Mucosa of descending colon (tissue), 3 donors: ENCODE measurements at regions of chr6 and their contacts with region 1.

Region 1: GRCh38 chr6:2999618-3000557 is at the start of gene NQO2:
- DNase-seq: peak; percentile 96 to 99 (median 97)
- ATAC-seq: peak; percentile 94
- H3K4me3 ChIP-seq: peak within 1 kb of the TSS; percentile 42
- H3K4me1 ChIP-seq: peaks cover 15% of the 10 kb centered on the region
- CTCF ChIP-seq: no peak
- total RNA-seq, gene NQO2: 13.4 to 24.1 (median 23.2) TPM

Region 2: GRCh38 chr6:3031857-3032640 is 32.2 kb after region 1 on chr6:
- intact Hi-C with region 1: no loop called
- DNase-seq: no peak
- ATAC-seq: peak; percentile 57
- H3K4me3 ChIP-seq: no peak overlapping the region
- H3K4me1 ChIP-seq: peaks cover 2% of the 10 kb centered on the region
- CTCF ChIP-seq: no peak

Region 3: DNA sequence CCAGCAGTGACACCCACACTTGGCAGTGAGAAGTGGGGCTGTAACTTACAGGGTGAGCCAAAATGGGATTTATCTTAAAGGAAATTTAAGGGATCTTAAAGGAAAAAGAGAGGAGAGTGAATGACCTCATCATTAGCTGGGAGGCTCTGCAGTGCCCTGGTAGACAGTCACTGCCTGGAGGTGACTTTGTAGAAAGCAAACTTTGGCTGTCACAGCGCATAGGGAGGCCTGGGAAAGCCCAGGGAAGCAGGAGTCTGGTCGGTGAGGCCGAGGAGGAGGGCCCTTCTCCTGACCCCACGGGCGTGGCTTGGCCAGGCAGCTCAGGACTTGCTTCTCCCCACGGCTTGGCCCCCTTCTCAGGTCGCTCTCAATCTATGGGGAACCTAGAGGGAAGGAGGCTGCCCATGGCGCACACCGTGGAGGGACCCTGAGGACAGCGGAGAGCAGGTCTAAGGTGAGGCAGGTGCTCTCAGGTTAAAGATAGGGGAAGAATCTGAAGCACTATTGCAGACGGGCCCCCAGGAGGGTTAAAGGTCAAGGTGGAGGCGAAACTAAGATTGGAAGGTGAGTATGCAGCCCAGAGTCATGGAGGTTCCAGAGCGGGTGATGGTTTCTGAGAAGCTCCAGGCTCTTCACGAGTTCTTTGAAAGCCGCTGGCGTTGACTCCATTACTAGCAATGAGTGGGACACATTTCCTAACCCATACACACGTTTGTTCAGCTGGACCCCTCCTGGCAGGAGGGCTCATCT is 52.8 kb after region 1 on chr6:
- intact Hi-C with region 1: loop called (anchors 2 to 5 kb)
- DNase-seq: peak in 1 of 3 donors; percentile 54
- ATAC-seq: no peak
- H3K4me3 ChIP-seq: no peak overlapping the region
- H3K4me1 ChIP-seq: peaks cover 3% of the 10 kb centered on the region
- CTCF ChIP-seq: no peak

Region 4: DNA sequence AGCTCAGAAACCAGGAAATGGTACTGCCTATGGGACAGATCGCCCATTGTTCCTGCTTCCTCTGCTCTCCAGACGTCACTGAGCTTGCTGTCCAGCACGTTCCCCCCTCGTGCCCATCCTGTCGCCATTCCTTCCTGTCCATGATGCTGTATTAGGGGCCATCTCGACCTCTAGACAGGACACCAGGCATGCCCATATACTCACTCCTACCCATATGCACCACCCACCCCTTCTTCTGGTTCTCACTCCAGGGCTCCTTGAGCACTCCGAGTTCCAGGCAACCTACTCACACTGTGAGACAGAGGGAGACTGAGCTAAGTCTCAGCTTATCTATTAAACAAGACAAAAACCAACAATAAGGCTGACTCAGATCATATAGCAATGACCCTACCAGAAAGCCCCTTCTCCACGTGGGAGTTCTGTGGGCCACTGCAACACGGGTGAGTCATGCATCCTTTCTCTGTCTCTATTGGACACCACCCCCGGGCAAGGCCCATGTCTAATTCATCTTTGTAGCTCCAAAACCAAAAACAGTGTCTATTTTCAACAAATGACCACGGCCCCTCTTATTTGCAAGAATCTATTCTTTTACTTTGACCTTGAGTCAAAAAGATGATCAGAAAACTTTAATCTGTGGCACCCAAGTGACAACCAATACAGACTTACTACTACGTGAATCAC is 324.5 kb after region 1 on chr6:
- intact Hi-C with region 1: no loop called
- DNase-seq: no peak
- ATAC-seq: peak; percentile 31
- H3K4me3 ChIP-seq: no peak overlapping the region
- H3K4me1 ChIP-seq: no peaks in the 10 kb centered on the region
- CTCF ChIP-seq: no peak